Natural killer cell (primary cell): ENCODE measurements at regions of chr17 and their contacts with region 1.

Region 1: GRCh38 chr17:8435245-8436168 is at the start of gene NDEL1:
- DNase-seq: peak; percentile 99
- ATAC-seq: peak; percentile 92 to 98 (median 94)
- H3K4me3 ChIP-seq: peak within 1 kb of the TSS; percentile 61
- H3K4me3 Mint-ChIP-seq: peak within 1 kb of the TSS; percentile 97
- H3K27ac ChIP-seq: peak within 1 kb of the TSS; percentile 97
- H3K27ac Mint-ChIP-seq: peak within 1 kb of the TSS; percentile 95 to 98
- H3K4me1 ChIP-seq: peaks cover 16% of the 10 kb centered on the region
- H3K4me1 Mint-ChIP-seq: peaks cover 13 to 22% of the 10 kb centered on the region in 2 donors
- H3K27me3 ChIP-seq: no peaks in the 10 kb centered on the region
- H3K27me3 Mint-ChIP-seq: no peaks in the 10 kb centered on the region
- CTCF ChIP-seq: no peak
- total RNA-seq, gene NDEL1: 174 to 219 (median 193) TPM

Region 2: GRCh38 chr17:8383143-8383822 is 52.2 kb before region 1 on chr17 and contains the start of gene RPL26:
- intact Hi-C with region 1: loop called (anchors 5 kb)
- DNase-seq: peak; percentile 92 to 98
- ATAC-seq: peak; percentile 85 to 97 (median 89)
- H3K4me3 ChIP-seq: peak within 1 kb of the TSS; percentile 56
- H3K4me3 Mint-ChIP-seq: peak within 1 kb of the TSS; percentile 99
- H3K27ac ChIP-seq: peak within 1 kb of the TSS; percentile 68
- H3K27ac Mint-ChIP-seq: peak within 1 kb of the TSS; percentile 89 to 98
- H3K4me1 ChIP-seq: peaks cover 41% of the 10 kb centered on the region
- H3K4me1 Mint-ChIP-seq: peaks cover 56 to 64% of the 10 kb centered on the region in 2 donors
- H3K27me3 ChIP-seq: no peaks in the 10 kb centered on the region
- H3K27me3 Mint-ChIP-seq: peaks cover 0 to 4% of the 10 kb centered on the region in 2 donors
- CTCF ChIP-seq: peak; percentile 99
- total RNA-seq, gene RPL26: 1,481 to 1,796 (median 1,628) TPM